ENCODE measurements at regions of chr4 and their contacts with region 1.

Region 1: GRCh38 chr4:166091912-166092510 is 219.0 kb downstream of the TLL1 start:
- DNase-seq: peak; percentile 17
- H3K4me3 ChIP-seq: no peak overlapping the region
- H3K27ac ChIP-seq: no peak overlapping the region
- H3K4me1 ChIP-seq: no peaks in the 10 kb centered on the region
- H3K27me3 ChIP-seq: no peaks in the 10 kb centered on the region
- CTCF ChIP-seq: peak; percentile 73 to 74

Region 2: GRCh38 chr4:165493359-165493758 is 598.7 kb before region 1 on chr4:
- CTCF ChIA-PET with region 1: no interaction called
- dilution Hi-C with region 1: no loop called
- in situ Hi-C with region 1: no loop called
- intact Hi-C with region 1: loop called (anchors 2 kb)
- DNase-seq: peak; percentile 49
- H3K4me3 ChIP-seq: peak overlapping the region in 1 of 3 experiments; percentile 8
- H3K27ac ChIP-seq: no peak overlapping the region
- H3K4me1 ChIP-seq: no peaks in the 10 kb centered on the region
- H3K27me3 ChIP-seq: no peaks in the 10 kb centered on the region
- CTCF ChIP-seq: peak; percentile 72 to 90

Region 3: DNA sequence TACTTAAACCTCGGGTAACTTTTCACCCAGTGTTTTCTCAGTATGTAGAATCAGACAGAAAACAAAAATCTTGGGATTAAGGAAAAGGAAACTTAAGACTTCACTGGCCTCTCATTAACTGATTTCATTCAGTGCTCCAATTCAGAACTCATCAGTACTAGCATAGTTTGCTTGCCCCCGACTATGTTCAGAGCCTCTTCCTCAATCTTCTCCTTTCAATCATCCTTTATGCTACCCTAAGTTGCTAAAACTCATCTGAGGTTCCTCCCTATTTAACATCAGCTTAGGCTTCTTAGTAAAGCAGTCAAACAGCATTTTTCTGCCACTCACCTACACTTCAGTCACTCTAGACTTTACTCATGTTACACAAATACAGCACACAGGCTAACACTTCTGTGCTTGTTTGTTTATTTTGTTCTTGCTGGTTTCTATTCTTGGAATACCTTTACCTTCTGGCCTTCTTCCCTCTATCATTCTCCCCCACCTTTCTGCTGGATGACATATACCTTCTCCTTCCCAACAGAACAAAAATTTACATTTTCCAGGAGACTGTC is 382.0 kb before region 1 on chr4:
- CTCF ChIA-PET with region 1: no interaction called
- dilution Hi-C with region 1: no loop called
- in situ Hi-C with region 1: no loop called
- intact Hi-C with region 1: loop called (anchors 5 kb)
- DNase-seq: no peak
- H3K4me3 ChIP-seq: no peak overlapping the region
- H3K27ac ChIP-seq: no peak overlapping the region
- H3K4me1 ChIP-seq: peaks cover 11% of the 10 kb centered on the region
- H3K27me3 ChIP-seq: no peaks in the 10 kb centered on the region
- CTCF ChIP-seq: no peak